CD4-positive, alpha-beta T cell (primary cell): ENCODE measurements at regions of chr16 and their contacts with region 1.

Region 1: GRCh38 chr16:72072514-72073342 is 9.7 kb downstream of the HPR start:
- DNase-seq: no peak
- ATAC-seq: no peak
- H3K4me3 ChIP-seq: no peak overlapping the region
- H3K4me3 Mint-ChIP-seq: no peak overlapping the region
- H3K27ac ChIP-seq: no peak overlapping the region
- H3K27ac Mint-ChIP-seq: no peak overlapping the region
- H3K4me1 ChIP-seq: no peaks in the 10 kb centered on the region
- H3K4me1 Mint-ChIP-seq: no peaks in the 10 kb centered on the region
- H3K27me3 ChIP-seq: no peaks in the 10 kb centered on the region
- H3K27me3 Mint-ChIP-seq: no peaks in the 10 kb centered on the region
- CTCF ChIP-seq: no peak

Region 2: DNA sequence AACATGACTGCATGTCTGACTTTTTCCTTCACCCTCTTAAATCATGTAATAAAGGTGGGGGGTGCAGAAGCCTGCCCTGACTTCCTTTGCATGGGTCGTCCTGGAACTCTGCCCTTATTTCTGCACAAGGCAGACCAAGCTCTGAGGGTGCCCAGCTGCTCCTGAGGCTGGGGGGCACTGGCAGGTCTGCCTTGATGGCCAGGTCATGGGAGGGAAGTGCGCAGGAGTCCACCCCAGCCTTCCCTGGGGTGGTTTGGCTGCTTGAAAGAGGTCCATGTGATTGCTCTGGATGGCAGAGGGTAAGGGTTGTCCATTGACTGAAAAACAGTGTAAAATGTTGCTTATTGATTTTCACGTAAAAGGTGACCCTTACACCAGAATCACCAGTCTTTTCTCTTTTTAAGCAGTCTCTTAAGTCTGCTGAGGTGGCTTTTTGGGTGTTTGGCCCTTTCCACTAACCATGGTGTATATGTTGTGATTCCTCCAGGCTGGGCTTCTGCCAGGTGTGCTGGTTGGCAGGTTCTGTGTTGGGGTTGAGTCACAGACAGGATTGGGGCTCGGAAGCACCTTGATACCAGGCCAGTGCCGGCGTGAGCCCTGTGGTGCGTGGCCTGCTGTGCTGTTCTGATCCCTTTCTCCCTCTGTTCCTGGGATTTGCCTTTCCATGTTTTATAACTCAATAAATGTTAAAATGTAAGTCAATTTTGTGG is 40.3 kb after region 1 on chr16:
- CTCF ChIA-PET with region 1: no interaction called
- POLR2A ChIA-PET with region 1: no interaction called
- intact Hi-C with region 1: loop called in 1 of 2 experiments (anchors 2 kb)
- DNase-seq: no peak
- ATAC-seq: no peak
- H3K4me3 ChIP-seq: no peak overlapping the region
- H3K4me3 Mint-ChIP-seq: no peak overlapping the region
- H3K27ac ChIP-seq: no peak overlapping the region
- H3K27ac Mint-ChIP-seq: no peak overlapping the region
- H3K4me1 ChIP-seq: no peaks in the 10 kb centered on the region
- H3K4me1 Mint-ChIP-seq: no peaks in the 10 kb centered on the region
- H3K27me3 ChIP-seq: no peaks in the 10 kb centered on the region
- H3K27me3 Mint-ChIP-seq: no peaks in the 10 kb centered on the region
- CTCF ChIP-seq: no peak

Region 3: GRCh38 chr16:72927199-72928089 is 854.7 kb after region 1 on chr16:
- CTCF ChIA-PET with region 1: no interaction called
- POLR2A ChIA-PET with region 1: no interaction called
- intact Hi-C with region 1: no loop called
- DNase-seq: peak in 2 of 14 experiments; percentile 44 to 55
- ATAC-seq: no peak
- H3K4me3 ChIP-seq: no peak overlapping the region
- H3K4me3 Mint-ChIP-seq: no peak overlapping the region
- H3K27ac ChIP-seq: no peak overlapping the region
- H3K27ac Mint-ChIP-seq: no peak overlapping the region
- H3K4me1 ChIP-seq: no peaks in the 10 kb centered on the region
- H3K4me1 Mint-ChIP-seq: peaks cover 6% of the 10 kb centered on the region
- H3K27me3 ChIP-seq: no peaks in the 10 kb centered on the region
- H3K27me3 Mint-ChIP-seq: no peaks in the 10 kb centered on the region
- CTCF ChIP-seq: no peak